ENCODE measurements at regions of chr7 and their contacts with region 1.

Region 1: DNA sequence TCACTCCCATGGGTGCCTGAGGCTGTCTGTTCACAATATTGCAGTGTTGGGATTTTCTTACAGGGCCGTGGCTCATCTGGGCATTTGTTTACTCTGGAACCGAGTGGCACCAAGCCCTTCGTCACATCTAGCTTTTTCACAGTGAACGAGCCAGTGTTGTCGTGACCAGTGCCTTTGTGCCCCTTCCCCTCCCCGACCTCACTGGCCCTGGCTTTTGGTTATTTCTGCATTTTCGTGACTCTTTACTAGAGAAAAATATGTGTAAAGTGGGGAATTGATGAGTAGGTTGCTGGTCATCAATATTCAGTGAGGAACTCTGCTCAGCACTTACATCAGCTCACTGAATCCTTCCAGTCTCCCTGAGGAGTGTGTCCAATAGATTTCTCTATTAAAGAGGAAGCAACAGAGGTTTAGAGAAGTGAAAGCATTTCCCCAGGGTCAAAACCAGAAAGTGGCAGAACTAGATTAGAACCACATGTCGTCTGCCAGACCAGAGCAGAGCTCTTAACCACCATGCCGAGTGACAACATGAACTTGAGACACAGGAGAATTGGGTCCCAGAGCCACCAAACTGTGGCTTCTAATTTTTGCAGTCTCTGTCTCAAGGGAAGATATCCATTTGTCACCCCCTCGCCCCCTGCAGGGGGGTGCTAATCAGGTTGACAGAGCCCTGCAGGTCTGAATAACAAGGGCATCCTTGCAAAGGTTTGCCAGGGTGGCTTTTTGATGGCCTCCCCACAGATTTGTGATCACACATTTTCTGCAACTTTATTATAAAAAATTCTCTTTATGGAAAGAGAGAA is 125.3 kb downstream of the CHN2 start:
- DNase-seq: peak in 9 of 10 donors; percentile 38 to 90 (median 73)
- H3K4me3 ChIP-seq: peak overlapping the region in 33 of 59 donors; percentile 3 to 54 (median 22)
- H3K27ac ChIP-seq: peak overlapping the region; percentile 80 to 100 (median 96)
- H3K27me3 ChIP-seq: no peaks in the 10 kb centered on the region
- CTCF ChIP-seq: peak in 4 of 56 donors; percentile 8 to 21 (median 12)

Region 2: DNA sequence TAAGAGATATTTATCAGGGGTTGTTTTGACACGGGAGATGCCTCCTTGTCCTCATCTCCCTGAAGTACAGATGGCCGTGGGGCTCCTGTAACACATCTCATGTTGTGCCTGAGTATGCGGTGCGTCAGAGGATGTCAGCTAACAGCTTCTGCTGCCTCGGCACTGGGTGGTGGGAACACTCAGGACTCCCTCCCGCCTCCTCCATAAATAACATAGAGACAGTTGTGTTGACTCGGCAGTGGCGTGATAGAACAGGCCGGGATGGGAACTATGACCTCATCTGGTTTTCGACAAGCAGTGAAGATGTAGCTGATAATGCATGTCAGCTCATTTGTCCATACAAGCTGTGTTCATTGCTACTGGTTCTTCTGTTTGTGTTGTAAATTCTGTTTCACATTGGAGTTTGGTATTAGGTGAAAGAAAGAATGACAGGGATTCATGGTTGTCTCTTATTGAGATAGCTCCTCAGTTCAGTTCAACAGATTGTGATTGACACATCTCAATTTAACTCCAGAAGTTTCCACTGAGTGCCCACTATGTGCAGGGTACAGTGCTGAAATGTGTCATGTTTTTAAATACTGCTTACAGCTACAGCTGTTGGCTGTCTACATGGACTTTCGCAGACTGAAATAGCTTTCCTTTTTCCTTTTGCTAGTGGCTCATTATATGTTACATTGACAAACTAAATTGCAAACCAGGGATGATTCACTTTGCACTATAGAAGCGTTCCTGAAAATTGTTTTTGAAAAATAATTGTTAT is 38.0 kb before region 1 on chr7:
- intact Hi-C with region 1: loop called in 1 of 2 experiments (anchors 5 kb)
- DNase-seq: peak; percentile 36 to 89 (median 78)
- H3K4me3 ChIP-seq: peak overlapping the region in 24 of 59 donors; percentile 0 to 42 (median 16)
- H3K27ac ChIP-seq: peak overlapping the region; percentile 19 to 98 (median 88)
- H3K27me3 ChIP-seq: no peaks in the 10 kb centered on the region
- CTCF ChIP-seq: peak in 3 of 56 donors; percentile 3 to 9 (median 5)

Measured in dorsolateral prefrontal cortex (tissue), 120 donors.